ENCODE measurements at regions of chrX and their contacts with region 1.

Region 1: DNA sequence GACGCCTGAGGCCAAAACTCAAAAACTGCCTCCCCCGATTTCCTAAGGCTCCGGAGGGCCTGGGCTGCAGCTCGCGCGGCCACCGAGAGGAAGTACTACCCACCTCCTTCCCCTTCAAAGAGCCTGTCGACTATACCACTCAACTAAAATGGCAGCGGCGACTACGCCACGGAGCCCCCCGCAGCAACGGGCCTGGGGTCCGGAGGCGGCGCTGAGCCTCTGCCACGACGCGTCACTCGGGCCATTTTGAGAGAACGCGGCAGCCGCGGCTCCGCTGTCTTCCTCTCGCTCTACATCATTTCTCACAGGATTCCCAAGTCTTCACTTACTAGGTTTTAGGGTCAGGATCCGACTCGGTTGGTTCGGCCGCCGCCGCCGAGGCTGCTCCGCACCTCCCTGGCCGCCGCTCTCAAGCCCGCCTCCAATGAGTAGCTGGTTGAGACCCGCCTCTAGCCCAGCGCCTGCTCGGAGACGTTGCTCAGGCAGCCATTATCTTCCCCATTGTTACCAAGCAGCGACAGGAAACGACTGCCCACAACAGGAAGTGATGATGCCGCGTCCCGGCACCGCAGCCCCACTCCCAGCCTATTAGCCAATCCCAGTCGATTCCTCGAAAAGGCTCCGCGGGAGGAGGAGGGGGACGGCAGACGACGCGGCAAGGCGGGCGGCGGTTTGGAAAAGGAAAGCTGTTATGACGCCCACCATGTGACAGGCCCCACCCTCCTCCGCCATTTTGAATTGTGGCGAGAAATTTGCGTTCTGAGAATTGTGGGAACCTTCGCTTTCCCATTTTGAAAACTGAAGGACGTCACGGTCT is at the start of gene RLIM:
- DNase-seq: peak; percentile 60 to 96 (median 95)
- ATAC-seq: peak; percentile 96
- H3K4me3 ChIP-seq: peak within 1 kb of the TSS; percentile 79
- H3K4me3 Mint-ChIP-seq: peak within 1 kb of the TSS; percentile 96 to 100 (median 99)
- H3K27ac ChIP-seq: peak within 1 kb of the TSS; percentile 98
- H3K27ac Mint-ChIP-seq: peak within 1 kb of the TSS; percentile 99 to 100 (median 100)
- H3K4me1 ChIP-seq: peaks cover 0 to 6% of the 10 kb centered on the region in 2 donors
- H3K4me1 Mint-ChIP-seq: peaks cover 0 to 42% (median 23%) of the 10 kb centered on the region in 7 donors
- H3K27me3 ChIP-seq: no peaks in the 10 kb centered on the region
- H3K27me3 Mint-ChIP-seq: no peaks in the 10 kb centered on the region
- total RNA-seq, gene RLIM: 31.6 to 51.3 (median 45.0) TPM

Region 2: DNA sequence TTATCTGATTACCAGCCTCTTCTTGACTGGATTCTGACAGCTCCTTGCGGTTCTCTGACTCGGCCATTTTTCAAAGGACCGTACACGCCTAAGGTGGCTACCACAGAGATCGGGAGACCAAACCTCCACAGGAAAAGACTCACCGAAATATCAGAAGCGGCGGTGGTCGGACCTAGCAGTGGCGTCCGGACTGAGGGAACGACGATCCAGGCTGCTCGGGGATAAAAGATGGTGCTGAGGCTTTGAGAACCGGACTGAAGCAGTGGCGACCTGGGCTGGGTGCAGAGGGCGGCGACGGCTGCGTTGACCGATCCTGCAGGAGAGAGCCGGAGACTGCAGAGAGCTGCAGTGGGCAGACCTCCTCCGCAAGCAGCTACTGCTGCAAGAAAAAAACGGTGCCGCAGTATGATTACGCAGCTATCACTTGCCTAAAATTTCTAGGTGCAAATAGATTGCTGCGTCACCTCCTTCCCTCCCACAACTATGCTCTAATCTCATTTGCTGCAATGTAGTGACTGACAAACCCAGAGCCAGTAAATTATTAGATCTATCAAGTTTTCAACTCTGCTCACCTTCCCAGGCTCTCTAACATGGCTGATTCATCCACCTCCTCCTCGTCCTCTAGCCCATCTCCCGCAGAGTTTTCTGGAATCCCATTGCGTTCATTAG is 1399.7 kb before region 1 on chrX and contains the start of gene NAP1L2:
- CTCF ChIA-PET with region 1: no interaction called
- POLR2A ChIA-PET with region 1: no interaction called
- intact Hi-C with region 1: loop called in 1 of 2 experiments (anchors 2 kb)
- DNase-seq: peak; percentile 3 to 64 (median 47)
- ATAC-seq: peak; percentile 92
- H3K4me3 ChIP-seq: peak within 1 kb of the TSS; percentile 77
- H3K4me3 Mint-ChIP-seq: peak within 1 kb of the TSS; percentile 87 to 95 (median 90)
- H3K27ac ChIP-seq: peak within 1 kb of the TSS; percentile 74
- H3K27ac Mint-ChIP-seq: peak within 1 kb of the TSS; percentile 68 to 94 (median 87)
- H3K4me1 ChIP-seq: no peaks in the 10 kb centered on the region
- H3K4me1 Mint-ChIP-seq: peaks cover 5 to 26% (median 14%) of the 10 kb centered on the region in 7 donors
- H3K27me3 ChIP-seq: no peaks in the 10 kb centered on the region
- H3K27me3 Mint-ChIP-seq: peaks cover 0 to 11% (median 4%) of the 10 kb centered on the region in 5 donors
- total RNA-seq, gene NAP1L2: 2.5 to 17.4 (median 2.8) TPM

Region 3: GRCh38 chrX:74291964-74292807 is 322.1 kb before region 1 on chrX:
- CTCF ChIA-PET with region 1: no interaction called
- POLR2A ChIA-PET with region 1: interaction called, 5 read pairs
- intact Hi-C with region 1: loop called (anchors 1 kb)
- DNase-seq: peak; percentile 60 to 87 (median 80)
- ATAC-seq: peak; percentile 93
- H3K4me3 ChIP-seq: peak overlapping the region; percentile 94
- H3K4me3 Mint-ChIP-seq: peak overlapping the region; percentile 83 to 100 (median 96)
- H3K27ac ChIP-seq: peak overlapping the region; percentile 82
- H3K27ac Mint-ChIP-seq: peak overlapping the region; percentile 90 to 100 (median 96)
- H3K4me1 ChIP-seq: peaks cover 0 to 9% of the 10 kb centered on the region in 2 donors
- H3K4me1 Mint-ChIP-seq: peaks cover 0 to 31% (median 19%) of the 10 kb centered on the region in 7 donors
- H3K27me3 ChIP-seq: no peaks in the 10 kb centered on the region
- H3K27me3 Mint-ChIP-seq: no peaks in the 10 kb centered on the region

Region 4: DNA sequence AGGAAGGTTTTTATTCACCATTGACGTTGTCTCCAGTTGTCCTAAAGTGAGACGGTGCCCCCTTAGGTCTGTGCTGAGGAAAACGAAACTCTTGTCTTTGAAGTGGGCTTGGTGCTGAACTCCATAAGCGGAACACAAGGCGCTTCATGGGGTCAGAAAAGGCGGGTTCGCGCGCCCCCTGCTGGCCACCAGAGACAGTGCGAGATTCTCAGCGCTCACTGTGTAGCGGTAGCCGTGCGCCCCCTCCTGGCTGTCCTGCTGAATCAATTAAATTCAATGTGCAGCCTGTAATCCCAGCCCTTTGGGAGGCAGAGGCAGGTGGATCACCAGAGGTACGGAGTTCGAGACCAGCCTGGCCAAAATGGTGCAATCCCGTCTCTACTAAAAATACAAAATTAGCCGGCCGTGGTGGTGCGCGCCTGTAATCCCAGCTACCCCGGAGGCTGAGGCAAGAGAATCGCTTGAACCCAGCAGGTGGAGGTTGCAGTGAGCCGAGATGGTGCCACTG is 64.0 kb before region 1 on chrX:
- CTCF ChIA-PET with region 1: interaction called, 3 read pairs
- POLR2A ChIA-PET with region 1: no interaction called
- intact Hi-C with region 1: loop called (anchors 5 kb)
- DNase-seq: peak; percentile 66 to 86 (median 80)
- ATAC-seq: peak; percentile 100
- H3K4me3 ChIP-seq: peak overlapping the region; percentile 21
- H3K4me3 Mint-ChIP-seq: peak overlapping the region; percentile 21 to 79 (median 76)
- H3K27ac ChIP-seq: no peak overlapping the region
- H3K27ac Mint-ChIP-seq: peak overlapping the region in 7 of 9 donors; percentile 9 to 59 (median 47)
- H3K4me1 ChIP-seq: no peaks in the 10 kb centered on the region
- H3K4me1 Mint-ChIP-seq: peaks cover 0 to 5% (median 3%) of the 10 kb centered on the region in 7 donors
- H3K27me3 ChIP-seq: no peaks in the 10 kb centered on the region
- H3K27me3 Mint-ChIP-seq: no peaks in the 10 kb centered on the region

Region 5: DNA sequence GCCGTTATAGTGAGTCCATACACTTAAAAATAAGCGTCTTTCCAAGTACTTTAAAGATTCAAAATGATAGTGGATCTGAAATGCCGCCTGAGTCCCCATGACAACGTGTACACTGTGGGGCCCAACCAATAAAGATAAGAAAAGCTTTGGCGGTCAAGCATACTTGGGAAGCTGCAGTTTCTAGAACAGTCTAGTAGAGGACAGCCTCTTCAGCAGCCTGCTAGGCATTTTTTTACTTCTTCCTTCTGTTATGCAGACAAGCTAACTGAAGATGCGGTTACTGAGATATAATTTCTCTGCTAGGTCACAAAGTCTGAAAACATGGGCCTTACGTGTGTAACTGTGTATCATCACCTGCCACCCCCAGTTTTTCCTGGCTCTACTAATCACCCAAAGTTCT is 659.2 kb after region 1 on chrX:
- CTCF ChIA-PET with region 1: interaction called, 3 read pairs
- POLR2A ChIA-PET with region 1: interaction called, 4 read pairs
- intact Hi-C with region 1: loop called (anchors 1 kb)
- DNase-seq: no peak
- ATAC-seq: peak; percentile 52
- H3K4me3 ChIP-seq: peak overlapping the region; percentile 97
- H3K4me3 Mint-ChIP-seq: peak overlapping the region; percentile 89 to 99 (median 94)
- H3K27ac ChIP-seq: peak overlapping the region; percentile 95
- H3K27ac Mint-ChIP-seq: peak overlapping the region; percentile 87 to 98 (median 96)
- H3K4me1 ChIP-seq: peaks cover 7 to 9% of the 10 kb centered on the region in 2 donors
- H3K4me1 Mint-ChIP-seq: peaks cover 15 to 68% (median 48%) of the 10 kb centered on the region in 7 donors
- H3K27me3 ChIP-seq: no peaks in the 10 kb centered on the region
- H3K27me3 Mint-ChIP-seq: no peaks in the 10 kb centered on the region

Region 6: DNA sequence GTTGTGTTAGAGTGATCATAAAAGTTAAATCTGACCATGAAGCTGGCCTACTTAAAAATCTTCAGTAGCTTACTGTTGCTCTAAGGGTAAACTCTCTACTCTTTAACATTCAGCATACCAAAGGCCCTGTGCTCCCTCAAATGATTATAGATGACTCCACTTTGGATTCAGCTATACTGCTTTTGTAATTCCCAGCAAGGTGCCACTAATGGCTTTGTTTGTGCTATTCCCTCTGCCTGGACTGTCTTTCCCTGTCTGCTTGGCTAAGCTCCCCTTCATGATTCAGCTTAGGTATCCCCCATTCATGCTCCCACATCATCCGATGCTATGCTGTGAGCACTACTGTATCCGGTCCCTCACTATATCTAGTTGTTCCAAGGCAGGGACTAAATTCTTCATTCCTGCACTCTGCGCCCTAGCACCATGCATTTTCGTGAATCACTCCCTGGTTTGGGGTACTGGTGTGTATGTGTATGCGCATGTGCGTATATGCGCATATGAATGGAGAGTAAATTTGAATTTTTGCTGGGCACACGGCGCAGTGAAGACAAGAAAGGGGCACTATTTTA is 1558.1 kb after region 1 on chrX:
- CTCF ChIA-PET with region 1: no interaction called
- POLR2A ChIA-PET with region 1: no interaction called
- intact Hi-C with region 1: loop called (anchors 1 to 5 kb)
- DNase-seq: no peak
- ATAC-seq: peak; percentile 56
- H3K4me3 ChIP-seq: peak overlapping the region; percentile 74
- H3K4me3 Mint-ChIP-seq: peak overlapping the region; percentile 87 to 97 (median 92)
- H3K27ac ChIP-seq: peak overlapping the region; percentile 81
- H3K27ac Mint-ChIP-seq: peak overlapping the region; percentile 92 to 97 (median 95)
- H3K4me1 ChIP-seq: peaks cover 19 to 20% of the 10 kb centered on the region in 2 donors
- H3K4me1 Mint-ChIP-seq: peaks cover 25 to 52% (median 48%) of the 10 kb centered on the region in 7 donors
- H3K27me3 ChIP-seq: no peaks in the 10 kb centered on the region
- H3K27me3 Mint-ChIP-seq: no peaks in the 10 kb centered on the region